Aorta (tissue), 5 donors: ENCODE measurements at regions of chr7 and their contacts with region 1.

Region 1: GRCh38 chr7:117750612-117751563 is 122.4 kb downstream of the CTTNBP2 start:
- DNase-seq: no peak
- ATAC-seq: no peak
- H3K4me3 ChIP-seq: no peak overlapping the region
- H3K27ac ChIP-seq: no peak overlapping the region
- H3K4me1 ChIP-seq: no peaks in the 10 kb centered on the region
- H3K27me3 ChIP-seq: no peaks in the 10 kb centered on the region

Region 2: DNA sequence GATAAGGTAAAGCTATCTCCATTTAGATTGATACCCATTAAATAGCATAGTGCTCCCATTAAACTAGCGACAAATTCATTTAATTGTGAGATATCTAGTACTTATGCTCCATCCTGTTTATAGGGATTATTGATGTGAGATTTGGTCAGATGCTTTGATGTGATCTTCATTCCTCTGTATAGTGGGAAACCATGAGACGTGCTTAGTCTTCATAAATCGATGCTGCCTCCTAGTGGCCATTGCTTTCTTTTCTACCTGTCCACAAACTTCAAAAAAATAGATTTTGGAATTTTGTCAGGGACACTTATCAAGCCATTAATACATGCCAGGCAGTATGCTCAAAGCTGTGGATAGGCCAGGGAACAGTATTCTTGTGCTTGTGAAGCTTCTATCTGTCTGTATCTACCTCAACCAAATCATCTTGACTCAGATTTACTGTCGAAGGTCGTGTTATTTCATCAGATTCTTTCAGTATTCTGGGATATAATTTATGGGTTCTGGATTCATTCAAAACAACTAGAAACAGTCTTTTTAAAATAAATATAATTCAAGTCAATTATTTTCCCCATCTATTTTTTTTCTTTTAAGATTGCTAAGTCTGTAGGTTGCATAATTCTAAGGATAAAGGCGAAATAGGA is 445.1 kb after region 1 on chr7:
- intact Hi-C with region 1: loop called (anchors 5 to 10 kb)
- DNase-seq: peak in 1 of 2 donors; percentile 46
- ATAC-seq: no peak
- H3K4me3 ChIP-seq: no peak overlapping the region
- H3K27ac ChIP-seq: no peak overlapping the region
- H3K4me1 ChIP-seq: no peaks in the 10 kb centered on the region
- H3K27me3 ChIP-seq: no peaks in the 10 kb centered on the region